PC-9 (cell line): ENCODE measurements at regions of chr11 and their contacts with region 1.

Region 1: DNA sequence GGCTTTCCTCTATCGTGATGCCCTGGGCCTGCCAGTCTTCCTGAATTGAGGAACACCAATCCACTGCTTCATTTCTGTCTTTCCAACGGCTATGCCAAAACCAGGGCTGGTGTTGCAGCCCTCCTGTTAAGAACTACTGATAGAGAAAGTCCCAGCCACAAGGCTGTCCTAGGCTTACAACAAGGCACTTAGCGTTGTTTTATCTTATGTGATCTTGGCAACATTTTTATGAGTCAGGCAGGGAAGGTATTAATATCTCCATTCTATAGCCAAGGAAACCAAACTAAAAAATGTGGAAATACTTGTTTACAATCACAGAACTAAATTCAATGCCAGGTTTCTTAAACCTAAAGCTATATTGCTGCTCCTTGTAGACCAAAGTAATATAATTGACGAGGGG is 89.9 kb upstream of the AMOTL1 start:
- DNase-seq: peak; percentile 35 to 98
- H3K4me3 ChIP-seq: peak overlapping the region; percentile 36
- H3K27ac ChIP-seq: peak overlapping the region; percentile 76
- H3K4me1 ChIP-seq: peaks cover 48% of the 10 kb centered on the region
- H3K27me3 ChIP-seq: no peaks in the 10 kb centered on the region
- CTCF ChIP-seq: no peak

Region 2: GRCh38 chr11:94650756-94651155 is 27.5 kb before region 1 on chr11:
- CTCF ChIA-PET with region 1: no interaction called
- POLR2A ChIA-PET with region 1: no interaction called
- intact Hi-C with region 1: no loop called
- DNase-seq: no peak
- H3K4me3 ChIP-seq: no peak overlapping the region
- H3K27ac ChIP-seq: no peak overlapping the region
- H3K4me1 ChIP-seq: peaks cover 2% of the 10 kb centered on the region
- H3K27me3 ChIP-seq: no peaks in the 10 kb centered on the region
- CTCF ChIP-seq: no peak

Region 3: DNA sequence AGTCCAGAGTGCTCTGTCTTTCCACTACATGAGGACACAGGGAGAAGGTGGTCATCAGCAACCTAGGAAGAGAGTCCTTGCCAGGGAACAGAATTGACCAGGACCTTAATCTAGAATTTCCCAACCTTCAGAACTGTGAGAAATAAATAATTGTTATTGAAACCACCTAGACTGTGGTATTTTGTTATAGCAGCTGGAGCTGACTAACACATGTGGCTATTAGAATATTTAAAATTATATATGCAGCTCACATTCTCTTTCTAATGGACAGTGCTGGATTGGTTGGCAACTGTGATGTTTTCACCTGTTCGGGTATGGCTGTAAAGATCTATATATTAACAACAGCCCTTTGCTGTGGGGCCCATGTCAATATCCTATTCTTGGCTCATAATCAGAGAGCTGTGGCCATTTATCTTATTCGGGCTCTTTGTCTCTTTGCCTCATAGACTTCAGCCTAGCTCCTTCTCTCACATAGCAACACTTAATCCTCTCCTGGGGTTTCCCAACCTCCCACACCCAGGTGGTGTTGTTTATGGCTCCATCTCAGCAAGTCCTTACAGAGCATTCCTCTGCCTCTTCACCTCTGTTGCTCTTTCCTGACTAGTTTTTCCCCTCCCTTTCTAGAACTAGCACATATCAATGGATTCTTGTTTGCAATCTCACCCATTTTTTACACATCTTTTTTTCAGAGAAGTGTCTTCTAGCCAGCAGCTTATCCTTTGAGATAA is 43.5 kb after region 1 on chr11:
- CTCF ChIA-PET with region 1: no interaction called
- POLR2A ChIA-PET with region 1: interaction called, 12 read pairs
- intact Hi-C with region 1: no loop called
- DNase-seq: no peak
- H3K4me3 ChIP-seq: no peak overlapping the region
- H3K27ac ChIP-seq: no peak overlapping the region
- H3K4me1 ChIP-seq: no peaks in the 10 kb centered on the region
- H3K27me3 ChIP-seq: no peaks in the 10 kb centered on the region
- CTCF ChIP-seq: no peak

Region 4: GRCh38 chr11:94741022-94741679 is 62.9 kb after region 1 on chr11:
- CTCF ChIA-PET with region 1: no interaction called
- POLR2A ChIA-PET with region 1: interaction called, 8 read pairs
- intact Hi-C with region 1: loop called (anchors 2 kb)
- DNase-seq: peak in 1 of 2 experiments; percentile 79
- H3K4me3 ChIP-seq: peak overlapping the region; percentile 93
- H3K27ac ChIP-seq: peak overlapping the region; percentile 48
- H3K4me1 ChIP-seq: peaks cover 85% of the 10 kb centered on the region
- H3K27me3 ChIP-seq: no peaks in the 10 kb centered on the region
- CTCF ChIP-seq: peak; percentile 64